ENCODE measurements at regions of chr19 and their contacts with region 1.

Region 1: GRCh38 chr19:16259385-16260159 is 61.9 kb downstream of the AP1M1 start:
- DNase-seq: peak; percentile 78
- ATAC-seq: peak; percentile 75
- H3K4me3 Mint-ChIP-seq: peak overlapping the region; percentile 65
- H3K27ac Mint-ChIP-seq: peak overlapping the region; percentile 93
- H3K4me1 Mint-ChIP-seq: peaks cover 90% of the 10 kb centered on the region
- H3K27me3 Mint-ChIP-seq: no peaks in the 10 kb centered on the region
- CTCF ChIP-seq: no peak

Region 2: GRCh38 chr19:16118489-16119033 is 141.0 kb before region 1 on chr19:
- CTCF ChIA-PET with region 1: no interaction called
- POLR2A ChIA-PET with region 1: no interaction called
- intact Hi-C with region 1: loop called (anchors 1 kb)
- DNase-seq: peak; percentile 76
- ATAC-seq: peak; percentile 87
- H3K4me3 Mint-ChIP-seq: peak overlapping the region; percentile 73
- H3K27ac Mint-ChIP-seq: peak overlapping the region; percentile 98
- H3K4me1 Mint-ChIP-seq: peaks cover 80% of the 10 kb centered on the region
- H3K27me3 Mint-ChIP-seq: no peaks in the 10 kb centered on the region
- CTCF ChIP-seq: no peak

Region 3: DNA sequence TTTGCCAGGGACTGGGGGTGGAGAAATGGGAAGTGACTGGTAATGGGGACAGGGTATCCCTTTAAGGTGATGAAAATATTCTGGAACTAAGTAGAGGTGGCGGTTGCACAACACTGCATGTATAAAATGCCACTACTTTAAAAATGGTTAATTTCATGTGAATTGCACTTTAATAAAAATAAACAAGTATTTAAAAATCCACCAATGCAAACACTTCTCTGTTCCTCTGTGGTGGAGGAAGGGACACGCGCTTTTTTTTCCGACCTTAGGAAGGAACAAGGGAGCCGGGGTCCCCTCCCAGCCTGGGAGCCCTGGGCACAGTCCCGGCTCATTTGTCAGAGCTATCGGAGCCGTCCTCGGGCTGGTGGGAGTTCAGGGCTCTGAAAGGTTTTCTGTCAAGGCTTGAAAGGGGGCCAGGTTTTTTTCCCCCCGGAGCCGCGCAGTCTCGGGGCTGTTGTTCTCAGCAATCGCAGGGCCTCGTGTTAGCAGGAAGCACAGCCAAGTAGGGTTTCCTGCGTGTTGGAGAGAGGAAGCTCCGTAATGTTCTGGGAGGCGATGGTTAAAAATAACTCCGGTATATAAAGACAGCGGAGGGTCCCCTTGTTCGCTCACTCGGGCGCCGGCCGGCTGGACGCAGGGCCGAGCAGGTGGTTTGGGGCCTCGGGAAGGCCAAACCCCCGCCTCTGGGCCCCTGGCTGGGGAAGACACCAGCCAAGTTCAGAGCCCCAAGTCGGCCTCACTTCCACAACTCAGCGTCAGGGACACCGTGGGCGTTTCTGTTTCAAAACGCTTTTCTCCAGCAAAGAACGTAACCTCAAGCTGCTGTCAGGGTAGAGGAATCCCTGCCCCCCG is 23.9 kb after region 1 on chr19:
- CTCF ChIA-PET with region 1: interaction called, 3 read pairs
- POLR2A ChIA-PET with region 1: interaction called, 9 read pairs
- intact Hi-C with region 1: loop called (anchors 1 kb)
- DNase-seq: peak; percentile 41
- ATAC-seq: peak; percentile 83
- H3K4me3 Mint-ChIP-seq: peak overlapping the region; percentile 66
- H3K27ac Mint-ChIP-seq: peak overlapping the region; percentile 78
- H3K4me1 Mint-ChIP-seq: peaks cover 51% of the 10 kb centered on the region
- H3K27me3 Mint-ChIP-seq: no peaks in the 10 kb centered on the region
- CTCF ChIP-seq: no peak

Region 4: DNA sequence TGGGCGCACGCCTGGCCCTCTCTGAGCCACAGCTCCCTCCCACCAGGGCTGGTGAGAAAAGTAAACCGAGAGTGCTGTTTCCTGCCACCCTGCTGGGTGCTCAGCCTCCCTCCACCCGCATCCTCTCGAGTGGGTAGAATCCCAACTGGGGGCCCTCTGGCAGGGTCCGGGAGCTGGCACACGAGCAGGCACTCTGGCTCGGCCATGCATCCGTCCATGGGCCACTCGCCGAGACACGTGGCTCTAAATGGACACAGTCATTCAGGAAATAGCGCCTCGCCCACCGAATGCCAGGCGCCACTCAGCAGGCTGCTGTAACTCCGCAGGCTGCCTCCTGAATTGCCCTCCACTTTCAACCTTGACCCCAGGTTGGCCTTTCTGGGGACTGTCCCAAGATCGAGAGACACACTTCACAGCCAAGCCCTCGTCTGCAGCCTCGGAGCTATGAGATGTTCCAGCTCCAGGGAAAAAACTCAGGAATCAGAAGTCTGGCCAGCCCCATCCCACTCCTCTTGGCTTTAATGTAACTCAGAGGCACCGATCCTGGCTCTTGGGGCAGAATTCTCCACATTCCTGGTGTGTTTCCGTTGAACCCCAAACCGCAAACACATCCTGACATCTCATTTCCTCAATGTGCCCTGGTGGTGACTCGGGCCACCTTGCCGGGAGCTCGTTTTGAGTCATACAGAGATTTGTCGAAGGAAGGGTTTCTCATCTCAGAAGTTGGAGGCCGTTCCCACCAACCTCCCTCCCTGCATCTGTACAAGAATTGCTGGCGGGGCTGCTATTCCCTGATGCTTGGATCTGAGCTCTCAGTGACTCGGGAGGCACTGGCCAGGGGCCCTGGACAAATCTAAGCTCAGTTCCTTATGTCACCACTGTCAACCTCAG is 79.1 kb after region 1 on chr19:
- CTCF ChIA-PET with region 1: interaction called, 4 read pairs
- POLR2A ChIA-PET with region 1: interaction called, 32 read pairs
- intact Hi-C with region 1: no loop called
- DNase-seq: no peak
- ATAC-seq: peak; percentile 19
- H3K4me3 Mint-ChIP-seq: peak overlapping the region; percentile 76
- H3K27ac Mint-ChIP-seq: peak overlapping the region; percentile 75
- H3K4me1 Mint-ChIP-seq: peaks cover 64% of the 10 kb centered on the region
- H3K27me3 Mint-ChIP-seq: no peaks in the 10 kb centered on the region
- CTCF ChIP-seq: no peak

Region 5: GRCh38 chr19:16441661-16442162 is 182.1 kb after region 1 on chr19:
- CTCF ChIA-PET with region 1: no interaction called
- POLR2A ChIA-PET with region 1: interaction called, 5 read pairs
- intact Hi-C with region 1: loop called (anchors 1 kb)
- DNase-seq: no peak
- ATAC-seq: no peak
- H3K4me3 Mint-ChIP-seq: no peak overlapping the region
- H3K27ac Mint-ChIP-seq: peak overlapping the region; percentile 95
- H3K4me1 Mint-ChIP-seq: peaks cover 82% of the 10 kb centered on the region
- H3K27me3 Mint-ChIP-seq: no peaks in the 10 kb centered on the region
- CTCF ChIP-seq: no peak

Region 6: GRCh38 chr19:16457195-16457953 is 197.8 kb after region 1 on chr19:
- CTCF ChIA-PET with region 1: no interaction called
- POLR2A ChIA-PET with region 1: no interaction called
- intact Hi-C with region 1: no loop called
- DNase-seq: no peak
- ATAC-seq: peak; percentile 45
- H3K4me3 Mint-ChIP-seq: peak overlapping the region; percentile 66
- H3K27ac Mint-ChIP-seq: peak overlapping the region; percentile 65
- H3K4me1 Mint-ChIP-seq: peaks cover 64% of the 10 kb centered on the region
- H3K27me3 Mint-ChIP-seq: no peaks in the 10 kb centered on the region
- CTCF ChIP-seq: no peak

Region 7: GRCh38 chr19:16615808-16616207 is 356.2 kb after region 1 on chr19:
- CTCF ChIA-PET with region 1: no interaction called
- POLR2A ChIA-PET with region 1: no interaction called
- intact Hi-C with region 1: no loop called
- DNase-seq: no peak
- ATAC-seq: no peak
- H3K4me3 Mint-ChIP-seq: no peak overlapping the region
- H3K27ac Mint-ChIP-seq: no peak overlapping the region
- H3K4me1 Mint-ChIP-seq: peaks cover 97% of the 10 kb centered on the region
- H3K27me3 Mint-ChIP-seq: no peaks in the 10 kb centered on the region
- CTCF ChIP-seq: no peak

Measured in activated B cell treated with CpG ODN at 0.5 μM for 24 hours (primary cell).